Colonic mucosa (tissue), 4 donors: ENCODE measurements at regions of chr12 and their contacts with region 1.

Region 1: GRCh38 chr12:42144408-42145196 is at the start of gene GXYLT1:
- DNase-seq: peak; percentile 94
- H3K4me3 ChIP-seq: peak within 1 kb of the TSS; percentile 63
- H3K27ac ChIP-seq: peak within 1 kb of the TSS; percentile 93
- H3K4me1 ChIP-seq: no peaks in the 10 kb centered on the region
- H3K27me3 ChIP-seq: no peaks in the 10 kb centered on the region
- CTCF ChIP-seq: no peak
- total RNA-seq, gene GXYLT1: 9.3 to 11.1 TPM

Region 2: DNA sequence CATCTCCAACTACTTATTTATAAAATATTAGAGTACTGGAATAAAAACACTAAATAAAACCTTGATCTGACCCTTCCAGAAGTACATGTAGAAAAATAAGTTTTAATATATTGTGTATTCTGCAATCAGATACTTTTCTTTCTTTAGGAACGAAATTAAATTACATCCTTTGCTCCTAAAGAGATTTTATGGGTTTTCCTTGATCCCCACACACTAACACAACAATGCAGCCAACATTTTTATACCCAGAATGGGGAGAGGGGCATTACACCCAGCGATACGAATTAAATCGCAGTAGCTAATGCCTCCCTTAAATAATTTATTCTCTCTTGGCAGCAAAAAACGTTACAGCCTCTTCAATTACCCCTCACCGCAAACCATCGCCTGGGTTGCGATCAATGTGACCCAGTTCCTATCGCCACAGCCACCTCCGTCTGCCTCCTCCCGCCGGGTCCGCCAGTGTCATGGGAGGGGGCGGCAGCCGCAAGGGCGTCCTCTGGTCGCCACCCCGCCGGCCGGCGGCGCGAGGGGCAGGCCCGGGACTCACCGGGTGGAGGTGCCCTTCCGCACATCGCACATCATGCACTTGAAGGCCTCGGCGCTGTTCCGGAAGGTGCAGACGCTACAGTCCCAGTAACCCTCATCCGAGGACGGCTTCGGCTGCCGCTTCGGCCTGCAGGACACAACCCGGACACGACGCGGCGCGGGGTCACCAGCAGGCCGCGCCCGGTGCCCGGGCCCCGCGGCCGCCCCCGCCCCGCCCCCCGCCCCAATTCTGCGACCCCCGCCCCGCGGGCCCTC is 92.7 kb after region 1 on chr12:
- intact Hi-C with region 1: loop called (anchors 10 kb)
- DNase-seq: peak; percentile 80
- H3K4me3 ChIP-seq: peak overlapping the region; percentile 69
- H3K27ac ChIP-seq: peak overlapping the region; percentile 88
- H3K4me1 ChIP-seq: no peaks in the 10 kb centered on the region
- H3K27me3 ChIP-seq: no peaks in the 10 kb centered on the region
- CTCF ChIP-seq: no peak